ENCODE measurements at regions of chr1 and their contacts with region 1.

Region 1: GRCh38 chr1:94335950-94336349 is 82.2 kb upstream of the ABCD3 start:
- DNase-seq: peak; percentile 93
- H3K4me3 Mint-ChIP-seq: no peak overlapping the region
- H3K27ac Mint-ChIP-seq: no peak overlapping the region
- H3K4me1 Mint-ChIP-seq: no peaks in the 10 kb centered on the region
- H3K27me3 Mint-ChIP-seq: peaks cover 11% of the 10 kb centered on the region
- CTCF ChIP-seq: peak; percentile 92

Region 2: DNA sequence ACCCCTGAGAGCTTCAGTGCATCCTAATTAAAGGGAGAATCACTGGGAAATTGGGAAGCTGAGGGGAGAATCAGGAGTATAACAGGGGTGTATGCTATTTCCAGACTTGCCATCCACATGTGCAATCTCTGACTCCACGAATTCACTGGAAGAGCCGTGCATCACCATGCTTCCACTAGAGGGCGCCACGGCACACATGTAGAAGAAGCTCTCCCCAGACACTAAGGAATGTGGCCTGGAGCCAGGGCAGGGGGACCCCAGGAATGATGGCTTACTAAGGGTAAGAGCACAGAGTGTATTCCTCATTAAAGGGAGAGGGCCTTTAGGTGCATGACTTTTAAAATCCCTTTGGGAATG is 296.5 kb before region 1 on chr1:
- CTCF ChIA-PET with region 1: interaction called, 298 read pairs
- POLR2A ChIA-PET with region 1: interaction called, 10 read pairs
- intact Hi-C with region 1: no loop called
- DNase-seq: peak; percentile 80
- H3K4me3 Mint-ChIP-seq: no peak overlapping the region
- H3K27ac Mint-ChIP-seq: no peak overlapping the region
- H3K4me1 Mint-ChIP-seq: peaks cover 19% of the 10 kb centered on the region
- H3K27me3 Mint-ChIP-seq: no peaks in the 10 kb centered on the region
- CTCF ChIP-seq: peak; percentile 89

Region 3: DNA sequence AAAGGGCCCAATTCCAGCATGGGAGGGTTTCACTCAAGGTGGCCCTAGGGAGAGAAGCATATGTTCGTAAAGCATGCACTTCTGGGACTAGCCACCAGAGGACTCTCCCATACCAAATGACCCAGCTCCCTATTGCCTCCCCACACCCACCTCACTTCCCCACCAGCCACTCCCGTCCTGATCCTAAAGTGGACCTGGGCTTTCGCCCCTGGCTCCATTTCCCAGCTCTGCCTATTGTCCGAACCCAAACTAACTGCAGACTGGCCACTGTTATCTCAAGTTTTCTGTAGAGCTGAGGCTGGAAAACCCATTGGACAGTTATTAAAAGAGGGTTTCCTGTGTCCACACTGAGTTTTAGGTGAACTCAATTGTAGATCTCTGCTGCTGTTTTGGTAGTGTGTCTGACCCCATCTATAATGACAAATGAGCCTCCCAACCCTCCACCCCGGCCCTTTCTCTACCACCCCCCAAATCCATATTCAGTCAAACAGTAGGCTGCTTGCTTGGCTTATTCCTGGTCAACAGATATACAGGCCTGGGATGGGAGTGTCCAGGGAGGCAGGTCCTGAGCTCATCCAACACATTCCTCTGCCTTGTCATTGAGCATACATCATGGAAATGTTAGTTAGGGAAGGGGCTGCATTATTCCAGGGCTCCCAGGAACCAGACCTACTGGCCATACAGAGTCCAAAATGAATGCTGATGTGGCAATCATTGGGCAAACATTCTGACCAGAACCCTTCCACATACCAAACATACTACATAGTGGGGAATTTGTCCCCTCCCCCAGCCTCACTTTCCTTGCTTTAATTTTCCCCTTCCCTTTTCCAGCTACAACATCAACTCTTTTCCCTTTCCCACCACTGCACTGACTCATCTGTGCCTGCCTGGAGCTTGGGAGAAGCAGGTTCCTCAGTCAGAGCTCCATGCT is 274.2 kb before region 1 on chr1:
- CTCF ChIA-PET with region 1: interaction called, 391 read pairs
- POLR2A ChIA-PET with region 1: interaction called, 13 read pairs
- intact Hi-C with region 1: loop called (anchors 1 kb)
- DNase-seq: peak; percentile 76
- H3K4me3 Mint-ChIP-seq: no peak overlapping the region
- H3K27ac Mint-ChIP-seq: no peak overlapping the region
- H3K4me1 Mint-ChIP-seq: peaks cover 5% of the 10 kb centered on the region
- H3K27me3 Mint-ChIP-seq: no peaks in the 10 kb centered on the region
- CTCF ChIP-seq: peak; percentile 87

Region 4: DNA sequence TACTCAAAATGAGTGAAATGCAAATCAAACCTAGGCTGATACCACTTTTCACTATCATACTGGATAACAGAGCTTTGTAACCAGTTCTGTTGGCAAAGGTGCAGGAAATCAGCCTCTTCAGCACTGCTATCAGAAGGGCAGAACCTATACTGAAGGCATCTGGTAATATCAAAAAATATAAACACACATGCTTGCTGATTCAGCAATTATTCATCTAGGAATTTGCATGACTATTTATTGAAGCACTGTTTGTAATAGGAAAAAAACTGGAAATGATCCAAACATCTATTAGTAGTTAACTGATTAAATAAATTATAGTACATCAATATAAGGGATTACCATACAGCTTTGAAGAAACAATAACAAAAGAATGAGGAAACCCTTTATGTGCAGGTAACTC is 120.0 kb before region 1 on chr1:
- CTCF ChIA-PET with region 1: interaction called, 12 read pairs
- POLR2A ChIA-PET with region 1: no interaction called
- intact Hi-C with region 1: no loop called
- DNase-seq: no peak
- H3K4me3 Mint-ChIP-seq: no peak overlapping the region
- H3K27ac Mint-ChIP-seq: no peak overlapping the region
- H3K4me1 Mint-ChIP-seq: peaks cover 20% of the 10 kb centered on the region
- H3K27me3 Mint-ChIP-seq: no peaks in the 10 kb centered on the region
- CTCF ChIP-seq: no peak

Region 5: GRCh38 chr1:94258873-94259331 is 77.0 kb before region 1 on chr1:
- CTCF ChIA-PET with region 1: interaction called, 12 read pairs
- POLR2A ChIA-PET with region 1: interaction called, 4 read pairs
- intact Hi-C with region 1: no loop called
- DNase-seq: peak; percentile 89
- H3K4me3 Mint-ChIP-seq: peak overlapping the region; percentile 50
- H3K27ac Mint-ChIP-seq: peak overlapping the region; percentile 99
- H3K4me1 Mint-ChIP-seq: peaks cover 46% of the 10 kb centered on the region
- H3K27me3 Mint-ChIP-seq: no peaks in the 10 kb centered on the region
- CTCF ChIP-seq: no peak

Region 6: GRCh38 chr1:94463765-94464330 is 127.9 kb after region 1 on chr1:
- CTCF ChIA-PET with region 1: interaction called, 93 read pairs
- POLR2A ChIA-PET with region 1: no interaction called
- intact Hi-C with region 1: loop called (anchors 1 kb)
- DNase-seq: peak; percentile 60
- H3K4me3 Mint-ChIP-seq: no peak overlapping the region
- H3K27ac Mint-ChIP-seq: no peak overlapping the region
- H3K4me1 Mint-ChIP-seq: peaks cover 6% of the 10 kb centered on the region
- H3K27me3 Mint-ChIP-seq: no peaks in the 10 kb centered on the region
- CTCF ChIP-seq: peak; percentile 51